Transverse colon (tissue), 4 donors: ENCODE measurements at regions of chr2 and their contacts with region 1.

Region 1: DNA sequence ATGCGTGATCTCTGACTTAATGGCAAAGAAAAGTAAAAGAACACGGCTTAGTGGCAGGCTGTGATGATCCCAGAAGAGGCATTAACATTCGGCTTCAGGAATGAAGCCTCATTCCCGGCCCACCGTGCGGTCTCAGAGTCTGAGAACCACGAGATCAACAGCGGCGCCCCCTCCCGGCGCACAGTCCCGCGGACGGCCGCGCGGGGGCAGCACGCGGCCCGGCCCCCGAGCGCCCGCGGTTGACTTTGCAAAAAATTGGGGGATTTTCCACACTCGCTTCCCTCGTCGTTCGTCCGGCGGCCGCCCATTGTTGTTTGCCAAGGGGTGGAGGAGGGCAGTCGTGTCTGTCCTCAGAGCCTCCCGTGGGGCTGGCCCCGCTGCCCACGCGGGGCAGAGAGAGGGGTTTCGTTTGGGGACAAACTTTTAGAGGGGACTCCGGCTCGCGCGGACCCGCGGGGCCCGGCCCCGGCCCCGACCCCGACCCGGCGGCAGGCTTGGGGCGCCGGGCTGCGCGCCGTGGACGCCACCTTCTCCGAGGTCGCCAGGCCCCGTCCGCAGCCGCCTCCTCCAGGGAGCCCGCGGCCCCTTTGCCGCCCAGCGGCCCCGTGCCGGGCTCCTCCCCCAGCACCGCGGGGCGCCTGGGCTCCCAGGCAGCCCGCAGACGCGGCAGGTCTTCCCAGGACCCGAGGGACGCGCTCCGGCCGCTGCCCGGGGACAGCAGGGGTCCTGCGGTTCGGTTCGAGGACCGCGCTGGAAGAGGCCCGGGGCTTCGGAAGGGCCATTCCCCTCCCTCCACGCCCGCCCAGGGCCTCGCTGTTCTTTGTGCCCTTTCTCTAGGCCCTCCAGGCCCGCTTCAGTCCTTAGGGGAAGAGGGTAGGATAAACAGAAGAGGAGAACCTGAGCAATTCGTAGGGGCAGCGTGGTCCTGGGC is 3.4 kb upstream of the HS6ST1 start:
- DNase-seq: peak; percentile 87
- H3K4me3 ChIP-seq: peak overlapping the region; percentile 45 to 89 (median 64)
- H3K27ac ChIP-seq: peak overlapping the region; percentile 73 to 87 (median 79)
- H3K4me1 ChIP-seq: peaks cover 6 to 24% (median 22%) of the 10 kb centered on the region in 4 donors
- H3K27me3 ChIP-seq: no peaks in the 10 kb centered on the region
- CTCF ChIP-seq: peak; percentile 41 to 98 (median 87)
- EP300 ChIP-seq: no peak
- POLR2A ChIP-seq: peak; percentile 17

Region 2: GRCh38 chr2:128178650-128179460 is 143.2 kb before region 1 on chr2:
- in situ Hi-C with region 1: no loop called
- intact Hi-C with region 1: loop called (anchors 10 kb)
- DNase-seq: peak; percentile 75
- H3K4me3 ChIP-seq: no peak overlapping the region
- H3K27ac ChIP-seq: peak overlapping the region; percentile 59 to 66 (median 62)
- H3K4me1 ChIP-seq: no peaks in the 10 kb centered on the region
- H3K27me3 ChIP-seq: no peaks in the 10 kb centered on the region
- CTCF ChIP-seq: peak; percentile 65 to 85 (median 75)
- EP300 ChIP-seq: peak; percentile 90
- POLR2A ChIP-seq: no peak

Region 3: DNA sequence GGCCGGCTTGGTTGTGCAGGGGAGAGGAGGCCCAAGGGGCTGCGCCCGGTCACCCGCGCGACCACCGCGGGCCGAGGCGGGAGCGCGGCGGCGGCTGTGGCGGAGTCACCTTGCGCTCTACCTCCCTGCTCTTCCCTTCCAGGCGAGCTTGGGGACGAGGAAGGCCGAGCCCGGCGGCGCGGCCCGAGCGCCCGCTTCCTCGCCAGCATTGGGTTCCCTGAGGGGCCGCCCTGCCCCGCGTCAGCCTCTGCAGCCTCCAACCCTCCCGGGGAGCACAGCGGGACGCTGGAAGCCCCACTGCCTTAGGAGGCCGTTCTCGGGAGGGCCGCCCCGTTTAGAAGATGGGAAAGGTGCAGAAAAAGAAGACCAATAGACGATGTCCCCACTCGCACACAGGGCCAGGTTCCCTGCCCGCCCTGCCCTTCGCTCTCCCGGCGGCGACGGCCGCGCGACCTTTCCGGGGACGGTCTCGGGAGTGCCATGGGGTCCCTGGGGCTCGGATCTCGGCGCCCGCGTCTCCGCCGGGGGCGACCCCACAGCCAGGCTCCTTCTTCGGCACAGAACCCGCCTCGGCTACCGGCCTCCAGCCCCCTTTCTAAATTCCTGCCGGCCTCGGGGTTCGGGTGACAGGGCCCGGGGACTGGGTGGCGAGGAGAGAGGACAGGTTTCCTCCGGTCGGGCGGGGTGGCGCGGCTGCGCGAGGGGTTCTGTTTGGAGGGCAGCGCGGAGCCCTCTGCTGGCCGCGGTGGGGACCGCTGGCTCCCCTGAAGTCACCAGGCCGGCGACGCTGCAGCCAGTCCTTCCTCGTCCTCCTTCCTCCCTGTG is 88.9 kb before region 1 on chr2:
- in situ Hi-C with region 1: no loop called
- intact Hi-C with region 1: loop called (anchors 10 kb)
- DNase-seq: peak; percentile 92
- H3K4me3 ChIP-seq: peak overlapping the region; percentile 45 to 82 (median 59)
- H3K27ac ChIP-seq: peak overlapping the region; percentile 76 to 84 (median 83)
- H3K4me1 ChIP-seq: peaks cover 0 to 25% (median 8%) of the 10 kb centered on the region in 4 donors
- H3K27me3 ChIP-seq: no peaks in the 10 kb centered on the region
- CTCF ChIP-seq: peak; percentile 87 to 92 (median 91)
- EP300 ChIP-seq: no peak
- POLR2A ChIP-seq: peak; percentile 54

Region 4: DNA sequence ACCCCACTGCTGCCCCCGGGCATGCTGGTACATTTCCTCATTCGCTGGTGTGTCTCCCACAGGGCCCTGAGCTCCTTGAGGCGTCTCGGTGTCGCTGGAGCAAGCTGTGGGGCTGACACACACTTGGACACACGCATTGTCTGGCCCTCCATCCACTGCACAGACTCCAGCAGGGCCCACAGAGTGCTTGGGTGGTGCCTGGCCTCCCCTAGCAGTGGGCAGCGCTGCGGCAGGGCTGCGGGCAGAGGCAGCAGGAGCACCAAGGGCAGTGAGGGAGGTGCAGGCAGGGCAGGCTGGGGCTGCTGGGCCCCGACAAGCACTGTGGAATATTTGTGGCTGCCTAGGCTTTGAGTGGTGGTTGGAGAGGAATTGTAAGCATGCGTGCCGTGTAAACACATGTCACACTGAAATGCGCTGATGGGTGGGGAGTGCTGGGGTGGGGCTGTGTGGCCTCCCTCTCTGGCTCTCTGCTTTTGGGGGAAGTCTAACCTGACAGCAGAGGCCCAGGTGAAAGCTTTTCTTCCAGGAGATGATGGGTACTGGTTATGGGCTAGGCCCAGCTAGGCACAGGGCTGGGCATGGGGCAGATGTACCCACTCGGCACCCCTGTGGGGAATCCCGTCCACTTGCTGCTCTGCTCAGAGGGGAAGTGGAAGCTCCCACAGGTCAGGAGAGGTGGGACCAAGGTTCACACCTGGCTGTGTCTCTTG is 52.1 kb after region 1 on chr2:
- in situ Hi-C with region 1: no loop called
- intact Hi-C with region 1: no loop called
- DNase-seq: peak; percentile 20
- H3K4me3 ChIP-seq: no peak overlapping the region
- H3K27ac ChIP-seq: peak overlapping the region; percentile 48 to 83 (median 65)
- H3K4me1 ChIP-seq: peaks cover 8 to 29% (median 21%) of the 10 kb centered on the region in 4 donors
- H3K27me3 ChIP-seq: no peaks in the 10 kb centered on the region
- CTCF ChIP-seq: no peak
- EP300 ChIP-seq: no peak
- POLR2A ChIP-seq: no peak

Region 5: GRCh38 chr2:129396980-129397599 is 1075.0 kb after region 1 on chr2:
- in situ Hi-C with region 1: no loop called
- intact Hi-C with region 1: loop called (anchors 5 kb)
- DNase-seq: no peak
- H3K4me3 ChIP-seq: no peak overlapping the region
- H3K27ac ChIP-seq: no peak overlapping the region
- H3K4me1 ChIP-seq: no peaks in the 10 kb centered on the region
- H3K27me3 ChIP-seq: no peaks in the 10 kb centered on the region
- CTCF ChIP-seq: peak; percentile 36 to 47 (median 42)
- EP300 ChIP-seq: no peak
- POLR2A ChIP-seq: no peak